ENCODE measurements at regions of chr14 and their contacts with region 1.

Region 1: GRCh38 chr14:99266181-99267178 is 5.5 kb downstream of the BCL11B start:
- DNase-seq: peak; percentile 93
- ATAC-seq: peak; percentile 38
- H3K4me3 Mint-ChIP-seq: peak overlapping the region; percentile 86
- H3K27ac Mint-ChIP-seq: peak overlapping the region; percentile 98
- H3K4me1 Mint-ChIP-seq: peaks cover 42% of the 10 kb centered on the region
- H3K27me3 Mint-ChIP-seq: no peaks in the 10 kb centered on the region
- CTCF ChIP-seq: peak; percentile 97

Region 2: GRCh38 chr14:98138666-98139065 is 1127.8 kb before region 1 on chr14:
- CTCF ChIA-PET with region 1: interaction called, 16 read pairs
- POLR2A ChIA-PET with region 1: interaction called, 8 read pairs
- intact Hi-C with region 1: no loop called
- DNase-seq: peak; percentile 74
- ATAC-seq: peak; percentile 46
- H3K4me3 Mint-ChIP-seq: peak overlapping the region; percentile 69
- H3K27ac Mint-ChIP-seq: peak overlapping the region; percentile 87
- H3K4me1 Mint-ChIP-seq: peaks cover 82% of the 10 kb centered on the region
- H3K27me3 Mint-ChIP-seq: no peaks in the 10 kb centered on the region
- CTCF ChIP-seq: peak; percentile 93

Region 3: DNA sequence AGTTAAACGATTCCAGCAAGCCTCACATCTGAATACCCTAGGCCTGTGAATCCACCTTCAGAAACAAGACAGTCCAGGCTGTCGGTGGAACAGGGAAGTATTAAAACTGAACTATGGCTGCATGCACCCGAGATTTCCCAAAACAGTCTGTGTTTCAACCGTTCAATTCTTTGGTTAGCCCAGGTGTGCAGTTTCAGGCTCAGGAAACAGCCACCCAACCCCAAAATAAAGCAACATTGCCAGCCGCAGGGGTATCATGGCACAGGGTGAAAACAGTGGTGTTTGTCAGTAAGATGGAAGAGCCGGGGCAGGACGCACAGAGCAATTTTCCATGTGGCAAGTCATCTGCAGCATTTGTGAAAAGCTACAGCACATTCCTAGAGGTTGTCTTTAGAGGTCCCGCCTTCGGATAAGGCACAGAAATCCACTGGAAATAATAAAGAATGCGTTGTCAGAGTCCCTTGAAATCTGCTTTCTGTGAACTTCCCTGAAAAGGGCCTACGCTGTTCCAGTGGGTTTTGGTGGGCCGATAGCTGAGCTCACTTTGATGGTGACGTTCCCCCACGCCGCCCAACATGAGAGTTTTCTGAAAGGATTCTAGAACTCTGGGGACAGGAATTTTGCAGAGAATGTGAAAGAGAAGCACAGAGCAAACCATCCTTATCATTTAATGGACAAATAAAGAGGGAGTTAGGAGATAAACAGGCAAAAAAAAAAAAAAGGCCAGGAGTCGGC is 79.4 kb before region 1 on chr14:
- CTCF ChIA-PET with region 1: interaction called, 27 read pairs
- POLR2A ChIA-PET with region 1: interaction called, 50 read pairs
- intact Hi-C with region 1: loop called (anchors 5 kb)
- DNase-seq: peak; percentile 28
- ATAC-seq: no peak
- H3K4me3 Mint-ChIP-seq: peak overlapping the region; percentile 68
- H3K27ac Mint-ChIP-seq: peak overlapping the region; percentile 94
- H3K4me1 Mint-ChIP-seq: peaks cover 86% of the 10 kb centered on the region
- H3K27me3 Mint-ChIP-seq: no peaks in the 10 kb centered on the region
- CTCF ChIP-seq: no peak

Region 4: GRCh38 chr14:99199846-99200653 is 66.4 kb before region 1 on chr14:
- CTCF ChIA-PET with region 1: interaction called, 11 read pairs
- POLR2A ChIA-PET with region 1: interaction called, 9 read pairs
- intact Hi-C with region 1: no loop called
- DNase-seq: no peak
- ATAC-seq: no peak
- H3K4me3 Mint-ChIP-seq: peak overlapping the region; percentile 29
- H3K27ac Mint-ChIP-seq: peak overlapping the region; percentile 98
- H3K4me1 Mint-ChIP-seq: peaks cover 99% of the 10 kb centered on the region
- H3K27me3 Mint-ChIP-seq: no peaks in the 10 kb centered on the region
- CTCF ChIP-seq: no peak

Region 5: DNA sequence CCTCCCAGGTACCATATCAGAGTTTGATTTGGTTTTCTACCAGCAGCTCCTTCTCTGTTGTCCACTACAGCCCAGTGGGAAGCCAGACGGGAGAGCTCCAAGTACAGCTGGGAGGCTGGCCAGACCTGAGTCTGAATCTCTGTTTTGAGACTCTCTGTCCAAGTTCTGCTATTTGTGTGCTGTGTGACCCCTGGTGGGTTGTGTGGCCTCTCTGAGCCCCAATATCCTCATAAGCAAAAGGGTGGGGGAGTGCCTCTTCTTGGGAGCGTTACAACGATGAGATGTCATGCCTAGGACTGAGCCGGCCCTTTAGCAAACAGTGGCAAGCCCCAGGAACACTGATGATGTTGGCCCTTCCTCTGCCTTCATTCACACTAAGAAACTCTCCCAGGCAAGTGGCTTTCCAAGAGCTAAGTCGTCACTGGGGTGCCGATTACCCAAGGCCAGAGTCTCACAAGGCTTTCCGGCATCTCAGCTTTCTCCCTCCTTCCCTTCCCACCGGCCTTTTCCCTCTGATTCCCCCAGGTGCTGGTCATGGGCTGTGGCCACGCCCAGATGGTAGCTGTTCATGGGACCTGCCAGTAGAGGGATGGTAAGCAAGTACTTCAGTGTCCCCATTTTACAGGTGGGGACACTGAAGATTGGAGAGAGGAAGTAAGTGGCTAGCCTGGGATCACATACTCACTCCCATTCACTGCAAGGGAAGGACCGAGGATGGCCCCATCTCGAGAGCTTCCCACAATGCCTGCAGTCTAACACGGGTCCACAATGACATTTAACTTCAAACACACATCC is 42.2 kb before region 1 on chr14:
- CTCF ChIA-PET with region 1: interaction called, 189 read pairs
- POLR2A ChIA-PET with region 1: interaction called, 496 read pairs
- intact Hi-C with region 1: no loop called
- DNase-seq: no peak
- ATAC-seq: peak; percentile 28
- H3K4me3 Mint-ChIP-seq: peak overlapping the region; percentile 52
- H3K27ac Mint-ChIP-seq: peak overlapping the region; percentile 99
- H3K4me1 Mint-ChIP-seq: peaks cover 94% of the 10 kb centered on the region
- H3K27me3 Mint-ChIP-seq: no peaks in the 10 kb centered on the region
- CTCF ChIP-seq: peak; percentile 42

Region 6: DNA sequence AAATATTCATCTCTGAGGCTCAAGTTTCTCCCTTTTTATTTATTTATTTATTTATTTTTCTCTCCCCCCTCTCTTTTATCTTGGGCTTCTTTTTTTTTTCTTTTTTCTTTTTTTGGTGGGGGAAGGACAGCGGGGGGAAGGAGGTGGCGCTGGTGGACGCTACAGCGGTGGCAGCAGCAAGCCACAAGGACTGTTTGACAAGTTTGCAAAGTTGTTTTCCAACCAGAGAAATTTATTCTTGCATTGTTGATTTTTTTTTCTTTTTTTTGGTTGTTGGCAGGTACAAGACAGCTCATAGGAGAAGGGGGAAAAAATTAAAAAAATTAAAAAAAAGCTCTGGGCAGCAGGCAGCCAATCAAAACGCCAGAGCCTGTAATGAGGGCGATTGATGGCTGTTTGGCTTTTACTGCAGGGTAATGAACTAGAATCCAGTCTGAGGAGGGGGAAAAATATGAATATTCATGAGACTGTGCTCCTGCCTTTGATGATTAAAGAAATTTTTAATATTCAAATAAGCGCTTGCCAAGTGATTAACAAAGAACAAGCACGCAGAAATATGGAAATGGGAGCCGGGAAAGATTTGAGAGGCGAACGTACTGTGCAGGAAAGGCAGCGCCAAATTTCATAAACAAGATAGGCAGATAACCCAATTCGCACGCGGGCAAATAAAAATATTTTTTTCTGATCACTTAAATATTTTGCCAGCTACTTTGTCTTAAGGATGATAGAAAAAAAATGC is 30.7 kb before region 1 on chr14:
- CTCF ChIA-PET with region 1: interaction called, 189 read pairs
- POLR2A ChIA-PET with region 1: interaction called, 496 read pairs
- intact Hi-C with region 1: loop called (anchors 2 kb)
- DNase-seq: no peak
- ATAC-seq: no peak
- H3K4me3 Mint-ChIP-seq: peak overlapping the region; percentile 79
- H3K27ac Mint-ChIP-seq: peak overlapping the region; percentile 99
- H3K4me1 Mint-ChIP-seq: peaks cover 91% of the 10 kb centered on the region
- H3K27me3 Mint-ChIP-seq: no peaks in the 10 kb centered on the region
- CTCF ChIP-seq: no peak

Region 7: GRCh38 chr14:99277530-99277929 is 11.1 kb after region 1 on chr14:
- CTCF ChIA-PET with region 1: interaction called, 12 read pairs
- POLR2A ChIA-PET with region 1: interaction called, 73 read pairs
- intact Hi-C with region 1: no loop called
- DNase-seq: no peak
- ATAC-seq: no peak
- H3K4me3 Mint-ChIP-seq: no peak overlapping the region
- H3K27ac Mint-ChIP-seq: no peak overlapping the region
- H3K4me1 Mint-ChIP-seq: peaks cover 42% of the 10 kb centered on the region
- H3K27me3 Mint-ChIP-seq: peaks cover 2% of the 10 kb centered on the region
- CTCF ChIP-seq: no peak

Region 8: GRCh38 chr14:99389174-99389826 is 122.8 kb after region 1 on chr14:
- CTCF ChIA-PET with region 1: no interaction called
- POLR2A ChIA-PET with region 1: no interaction called
- intact Hi-C with region 1: no loop called
- DNase-seq: peak; percentile 39
- ATAC-seq: peak; percentile 64
- H3K4me3 Mint-ChIP-seq: no peak overlapping the region
- H3K27ac Mint-ChIP-seq: no peak overlapping the region
- H3K4me1 Mint-ChIP-seq: peaks cover 10% of the 10 kb centered on the region
- H3K27me3 Mint-ChIP-seq: peaks cover 8% of the 10 kb centered on the region
- CTCF ChIP-seq: peak; percentile 66

Measured in activated CD8-positive, alpha-beta T cell treated with anti-CD3 and anti-CD28 coated beads for 36 hours (primary cell).